Prostate gland (tissue), 2 donors: ENCODE measurements at regions of chr18 and their contacts with region 1.

Region 1: GRCh38 chr18:7514796-7515440 is 52.2 kb upstream of the PTPRM start:
- DNase-seq: no peak
- H3K4me3 ChIP-seq: no peak overlapping the region
- H3K27ac ChIP-seq: no peak overlapping the region
- H3K4me1 ChIP-seq: no peaks in the 10 kb centered on the region
- H3K27me3 ChIP-seq: no peaks in the 10 kb centered on the region
- CTCF ChIP-seq: no peak
- POLR2A ChIP-seq: no peak

Region 2: GRCh38 chr18:7467710-7468466 is 47.0 kb before region 1 on chr18:
- intact Hi-C with region 1: loop called (anchors 5 kb)
- DNase-seq: no peak
- H3K4me3 ChIP-seq: no peak overlapping the region
- H3K27ac ChIP-seq: no peak overlapping the region
- H3K4me1 ChIP-seq: no peaks in the 10 kb centered on the region
- H3K27me3 ChIP-seq: no peaks in the 10 kb centered on the region
- CTCF ChIP-seq: no peak
- POLR2A ChIP-seq: no peak